Adrenal gland (tissue), 19 donors: ENCODE measurements at regions of chr12 and their contacts with region 1.

Region 1: GRCh38 chr12:49232940-49233841 is 31.7 kb upstream of the TUBA1C start:
- DNase-seq: peak; percentile 65 to 92 (median 86)
- H3K4me3 ChIP-seq: peak overlapping the region in 2 of 4 donors; percentile 1 to 21
- H3K27ac ChIP-seq: peak overlapping the region; percentile 70 to 98 (median 86)
- H3K4me1 ChIP-seq: peaks cover 29 to 50% of the 10 kb centered on the region in 2 donors
- H3K27me3 ChIP-seq: no peaks in the 10 kb centered on the region
- CTCF ChIP-seq: peak in 4 of 6 experiments; percentile 13 to 45 (median 28)
- POLR2A ChIP-seq: peak in 1 of 2 donors; percentile 67

Region 2: DNA sequence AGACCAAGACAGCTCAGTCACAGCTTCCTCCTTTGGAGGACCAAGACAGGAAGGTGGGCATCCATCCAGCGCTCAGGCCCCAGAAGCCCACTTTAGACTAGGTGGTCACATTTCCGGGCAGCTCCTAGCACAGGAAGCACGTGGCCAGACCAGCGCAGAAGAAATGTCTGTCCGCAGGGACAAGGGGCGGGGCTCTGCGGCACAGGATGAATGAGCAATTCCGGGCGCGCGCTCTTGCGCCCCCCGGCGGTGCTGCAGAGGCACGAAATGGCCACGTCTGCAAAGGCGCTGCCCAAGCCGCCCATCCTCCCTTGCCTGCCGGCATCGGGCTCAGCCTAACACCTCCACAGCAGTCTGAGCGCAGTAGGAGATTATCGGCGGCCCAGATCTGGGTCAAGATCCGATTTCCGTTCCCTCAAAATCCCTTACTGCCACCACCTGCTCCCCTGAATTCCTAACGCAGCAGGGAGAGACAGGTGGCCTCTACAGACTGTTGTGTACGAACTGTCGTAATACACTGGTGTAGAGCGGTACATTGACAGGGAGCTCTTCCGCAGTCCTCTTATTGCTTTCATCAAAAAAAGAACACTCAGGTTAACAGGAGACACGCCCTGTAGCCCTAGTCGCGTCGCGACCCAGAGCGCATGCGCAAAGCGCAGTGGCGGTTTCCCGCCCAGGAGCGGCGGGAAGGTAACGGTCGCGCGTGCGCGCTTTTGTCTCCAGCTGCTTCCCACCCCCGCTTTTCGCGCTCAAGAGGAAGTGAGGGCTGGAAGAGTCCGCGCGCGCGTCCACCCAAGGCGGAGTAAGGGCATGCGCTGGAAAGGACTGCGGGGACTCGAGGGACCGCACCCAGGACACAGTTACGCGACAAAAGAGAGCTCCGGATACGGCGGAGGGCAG is 102.8 kb before region 1 on chr12:
- intact Hi-C with region 1: loop called (anchors 5 to 10 kb)
- DNase-seq: peak; percentile 93 to 98 (median 95)
- H3K4me3 ChIP-seq: peak overlapping the region; percentile 75 to 97 (median 86)
- H3K27ac ChIP-seq: peak overlapping the region; percentile 97 to 99 (median 99)
- H3K4me1 ChIP-seq: peaks cover 11 to 27% of the 10 kb centered on the region in 2 donors
- H3K27me3 ChIP-seq: no peaks in the 10 kb centered on the region
- CTCF ChIP-seq: peak; percentile 74 to 94 (median 90)
- POLR2A ChIP-seq: no peak

Region 3: DNA sequence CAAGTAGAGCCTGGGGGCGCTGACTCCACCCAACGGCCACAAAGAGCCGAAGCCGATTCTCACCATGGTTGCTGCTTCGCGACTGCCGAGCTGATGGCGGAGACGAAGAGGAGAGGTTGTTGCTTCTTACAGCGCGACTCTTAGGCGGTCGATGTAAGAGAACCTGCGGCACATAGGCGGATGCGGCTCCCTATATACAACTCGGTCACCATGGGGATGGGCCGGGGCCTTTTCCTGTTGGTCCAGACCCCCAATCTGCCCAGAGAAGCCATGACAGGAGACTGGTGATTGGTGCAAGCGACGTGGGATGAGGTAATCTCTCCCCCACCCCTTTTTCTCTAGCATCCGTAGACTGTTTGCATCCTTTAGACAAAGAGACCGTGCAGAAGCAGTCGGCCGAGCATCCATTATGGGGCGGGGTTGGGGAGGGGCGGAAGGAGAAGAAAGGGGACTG is 44.2 kb before region 1 on chr12 and contains the start of gene TUBA1A:
- intact Hi-C with region 1: loop called (anchors 5 to 10 kb)
- DNase-seq: peak; percentile 89 to 99 (median 95)
- H3K4me3 ChIP-seq: peak within 1 kb of the TSS; percentile 25 to 99 (median 63)
- H3K27ac ChIP-seq: peak within 1 kb of the TSS; percentile 73 to 98 (median 90)
- H3K4me1 ChIP-seq: peaks cover 9 to 19% of the 10 kb centered on the region in 2 donors
- H3K27me3 ChIP-seq: no peaks in the 10 kb centered on the region
- CTCF ChIP-seq: no peak
- POLR2A ChIP-seq: peak; percentile 93 to 95
- total RNA-seq, gene TUBA1A: 59.1 to 315 (median 145) TPM